ENCODE measurements at regions of chr6 and their contacts with region 1.

Region 1: GRCh38 chr6:16216501-16217155 is 21.8 kb upstream of the GMPR start:
- DNase-seq: peak in 1 of 2 experiments; percentile 54
- H3K4me3 ChIP-seq: peak overlapping the region in 1 of 4 experiments; percentile 38; a peak in 2 of 8 replicates
- H3K27ac ChIP-seq: no peak overlapping the region
- H3K4me1 ChIP-seq: no peaks in the 10 kb centered on the region
- H3K27me3 ChIP-seq: peaks cover 0 to 3% (median 0%) of the 10 kb centered on the region in 4 experiments; a peak in 2 of 7 replicates
- CTCF ChIP-seq: peak in 1 of 3 experiments; percentile 0; a peak in 1 of 4 replicates
- EP300 ChIP-seq: no peak
- POLR2A ChIP-seq: no peak
- RAD21 ChIP-seq: no peak

Region 2: DNA sequence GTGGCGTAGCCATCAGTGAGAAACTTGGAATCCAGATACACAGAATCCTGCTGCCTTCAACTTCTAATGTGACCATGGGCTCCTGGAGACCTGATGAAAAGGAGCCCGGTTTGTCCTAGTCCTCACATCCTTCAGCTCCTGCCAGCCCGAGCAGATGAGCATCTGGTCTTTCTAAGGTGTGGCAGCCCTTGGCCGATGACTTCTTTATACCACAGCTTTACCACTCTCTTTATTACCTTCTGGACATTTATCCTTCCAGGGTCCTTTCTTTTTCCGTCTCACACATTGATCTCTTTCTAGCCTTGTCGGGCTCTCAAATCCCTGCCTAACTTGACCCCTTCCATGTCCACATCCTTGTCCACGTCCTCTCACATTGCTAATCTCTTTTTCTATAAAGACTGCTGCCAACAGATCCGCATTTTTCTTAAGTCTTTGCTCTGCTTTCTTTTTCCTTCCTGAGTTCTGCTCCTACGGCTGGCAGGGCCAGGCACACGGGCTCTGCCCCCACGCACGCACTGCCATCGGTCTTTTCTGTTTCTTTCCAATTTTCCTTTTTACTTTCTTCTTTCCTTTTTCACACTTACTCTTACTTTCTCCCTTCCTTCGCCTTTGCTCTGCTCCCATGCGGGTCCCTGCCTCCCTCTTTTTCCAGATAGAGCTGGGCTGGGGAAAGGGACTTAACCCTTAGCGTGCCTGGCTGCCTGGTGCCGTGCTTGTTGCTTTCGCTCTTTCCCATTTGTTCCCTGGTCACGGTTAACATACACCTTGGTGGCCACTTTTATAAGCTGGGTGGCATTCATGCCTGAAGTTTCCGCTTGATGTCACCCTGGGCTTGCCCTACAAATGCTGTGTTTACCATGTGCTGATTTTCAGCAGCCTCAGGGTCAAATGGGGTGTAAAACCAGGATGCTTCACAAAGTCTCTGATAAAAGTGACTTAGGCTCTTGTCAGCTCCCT is 12.4 kb after region 1 on chr6:
- CTCF ChIA-PET with region 1: interaction called, 10 read pairs
- POLR2A ChIA-PET with region 1: no interaction called
- DNase-seq: no peak
- H3K4me3 ChIP-seq: no peak overlapping the region
- H3K27ac ChIP-seq: no peak overlapping the region
- H3K4me1 ChIP-seq: peaks cover 2 to 5% (median 5%) of the 10 kb centered on the region in 4 experiments; a peak in 5 of 7 replicates
- H3K27me3 ChIP-seq: peaks cover 0 to 2% (median 0%) of the 10 kb centered on the region in 4 experiments; a peak in 1 of 7 replicates
- CTCF ChIP-seq: no peak
- EP300 ChIP-seq: no peak
- POLR2A ChIP-seq: no peak
- RAD21 ChIP-seq: no peak